MCF 10A (cell line): ENCODE measurements at regions of chr11 and their contacts with region 1.

Region 1: GRCh38 chr11:10307442-10308207 is 2.8 kb downstream of the ADM start:
- DNase-seq: peak; percentile 87
- H3K4me3 Mint-ChIP-seq: peak overlapping the region; percentile 79
- H3K27ac Mint-ChIP-seq: peak overlapping the region; percentile 87
- H3K4me1 Mint-ChIP-seq: peaks cover 45% of the 10 kb centered on the region
- H3K27me3 Mint-ChIP-seq: no peaks in the 10 kb centered on the region
- CTCF ChIP-seq: peak; percentile 99

Region 2: GRCh38 chr11:9573052-9573774 is 734.4 kb before region 1 on chr11 and contains the start of gene WEE1:
- CTCF ChIA-PET with region 1: interaction called, 5 read pairs
- POLR2A ChIA-PET with region 1: interaction called, 66 read pairs
- intact Hi-C with region 1: no loop called
- DNase-seq: peak; percentile 98
- H3K4me3 Mint-ChIP-seq: peak within 1 kb of the TSS; percentile 79
- H3K27ac Mint-ChIP-seq: peak within 1 kb of the TSS; percentile 99
- H3K4me1 Mint-ChIP-seq: peaks cover 20% of the 10 kb centered on the region
- H3K27me3 Mint-ChIP-seq: no peaks in the 10 kb centered on the region
- CTCF ChIP-seq: no peak
- total RNA-seq, gene WEE1: 28.7 and 34.5 TPM in 2 replicates

Region 3: GRCh38 chr11:9802291-9802861 is 505.2 kb before region 1 on chr11:
- CTCF ChIA-PET with region 1: interaction called, 4 read pairs
- POLR2A ChIA-PET with region 1: interaction called, 28 read pairs
- intact Hi-C with region 1: no loop called
- DNase-seq: peak; percentile 38
- H3K4me3 Mint-ChIP-seq: peak overlapping the region; percentile 6
- H3K27ac Mint-ChIP-seq: peak overlapping the region; percentile 97
- H3K4me1 Mint-ChIP-seq: peaks cover 12% of the 10 kb centered on the region
- H3K27me3 Mint-ChIP-seq: no peaks in the 10 kb centered on the region
- CTCF ChIP-seq: no peak

Region 4: GRCh38 chr11:9982800-9983579 is 324.6 kb before region 1 on chr11:
- CTCF ChIA-PET with region 1: interaction called, 22 read pairs
- POLR2A ChIA-PET with region 1: interaction called, 12 read pairs
- intact Hi-C with region 1: no loop called
- DNase-seq: peak; percentile 80
- H3K4me3 Mint-ChIP-seq: peak overlapping the region; percentile 55
- H3K27ac Mint-ChIP-seq: peak overlapping the region; percentile 91
- H3K4me1 Mint-ChIP-seq: peaks cover 25% of the 10 kb centered on the region
- H3K27me3 Mint-ChIP-seq: no peaks in the 10 kb centered on the region
- CTCF ChIP-seq: no peak

Region 5: GRCh38 chr11:10233581-10233980 is 74.0 kb before region 1 on chr11:
- CTCF ChIA-PET with region 1: interaction called, 4 read pairs
- POLR2A ChIA-PET with region 1: interaction called, 47 read pairs
- intact Hi-C with region 1: no loop called
- DNase-seq: peak; percentile 32
- H3K4me3 Mint-ChIP-seq: no peak overlapping the region
- H3K27ac Mint-ChIP-seq: no peak overlapping the region
- H3K4me1 Mint-ChIP-seq: peaks cover 7% of the 10 kb centered on the region
- H3K27me3 Mint-ChIP-seq: no peaks in the 10 kb centered on the region
- CTCF ChIP-seq: no peak

Region 6: GRCh38 chr11:10293423-10294289 is 14.0 kb before region 1 on chr11 and contains the start of gene SBF2:
- CTCF ChIA-PET with region 1: interaction called, 10 read pairs
- POLR2A ChIA-PET with region 1: interaction called, 217 read pairs
- intact Hi-C with region 1: no loop called
- DNase-seq: peak; percentile 84
- H3K4me3 Mint-ChIP-seq: peak within 1 kb of the TSS; percentile 72
- H3K27ac Mint-ChIP-seq: peak within 1 kb of the TSS; percentile 74
- H3K4me1 Mint-ChIP-seq: peaks cover 25% of the 10 kb centered on the region
- H3K27me3 Mint-ChIP-seq: no peaks in the 10 kb centered on the region
- CTCF ChIP-seq: no peak
- total RNA-seq, gene SBF2: 28.3 and 28.7 TPM in 2 replicates